Activated naive CD4-positive, alpha-beta T cell treated with anti-CD3 and anti-CD28 coated beads for 36 hours (primary cell): ENCODE measurements at regions of chr12 and their contacts with region 1.

Region 1: GRCh38 chr12:121033625-121034349 is 5.3 kb downstream of the OASL start:
- DNase-seq: peak; percentile 82
- H3K4me3 Mint-ChIP-seq: no peak overlapping the region
- H3K27ac Mint-ChIP-seq: peak overlapping the region; percentile 58
- H3K4me1 Mint-ChIP-seq: peaks cover 52% of the 10 kb centered on the region
- H3K27me3 Mint-ChIP-seq: no peaks in the 10 kb centered on the region

Region 2: GRCh38 chr12:119334430-119335170 is 1699.2 kb before region 1 on chr12 and contains the start of gene CCDC60:
- CTCF ChIA-PET with region 1: no interaction called
- intact Hi-C with region 1: no loop called
- DNase-seq: no peak
- H3K4me3 Mint-ChIP-seq: no peak within 1 kb of the TSS
- H3K27ac Mint-ChIP-seq: no peak within 1 kb of the TSS
- H3K4me1 Mint-ChIP-seq: no peaks in the 10 kb centered on the region
- H3K27me3 Mint-ChIP-seq: peaks cover 21% of the 10 kb centered on the region
- total RNA-seq, gene CCDC60: not detected

Region 3: DNA sequence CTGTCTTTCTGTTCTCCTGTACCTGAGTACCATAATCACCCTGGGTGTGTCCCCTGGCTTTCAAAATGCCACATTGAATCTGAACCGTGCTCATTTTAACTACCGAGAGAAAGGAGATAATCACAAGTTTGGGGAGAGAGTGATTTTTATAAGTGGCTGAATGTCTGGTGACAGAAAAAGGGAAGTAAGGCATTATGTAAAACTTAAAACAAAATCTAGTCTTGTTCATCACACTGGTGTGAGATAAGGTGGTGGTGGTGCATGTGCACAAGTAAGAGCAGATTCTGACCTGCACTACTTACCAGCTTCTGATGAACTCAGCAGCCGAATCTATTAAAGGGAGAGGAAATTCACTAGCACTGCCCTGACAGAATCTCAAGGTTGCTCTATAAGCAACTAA is 186.0 kb before region 1 on chr12:
- CTCF ChIA-PET with region 1: no interaction called
- intact Hi-C with region 1: no loop called
- DNase-seq: no peak
- H3K4me3 Mint-ChIP-seq: no peak overlapping the region
- H3K27ac Mint-ChIP-seq: no peak overlapping the region
- H3K4me1 Mint-ChIP-seq: peaks cover 59% of the 10 kb centered on the region
- H3K27me3 Mint-ChIP-seq: no peaks in the 10 kb centered on the region

Region 4: DNA sequence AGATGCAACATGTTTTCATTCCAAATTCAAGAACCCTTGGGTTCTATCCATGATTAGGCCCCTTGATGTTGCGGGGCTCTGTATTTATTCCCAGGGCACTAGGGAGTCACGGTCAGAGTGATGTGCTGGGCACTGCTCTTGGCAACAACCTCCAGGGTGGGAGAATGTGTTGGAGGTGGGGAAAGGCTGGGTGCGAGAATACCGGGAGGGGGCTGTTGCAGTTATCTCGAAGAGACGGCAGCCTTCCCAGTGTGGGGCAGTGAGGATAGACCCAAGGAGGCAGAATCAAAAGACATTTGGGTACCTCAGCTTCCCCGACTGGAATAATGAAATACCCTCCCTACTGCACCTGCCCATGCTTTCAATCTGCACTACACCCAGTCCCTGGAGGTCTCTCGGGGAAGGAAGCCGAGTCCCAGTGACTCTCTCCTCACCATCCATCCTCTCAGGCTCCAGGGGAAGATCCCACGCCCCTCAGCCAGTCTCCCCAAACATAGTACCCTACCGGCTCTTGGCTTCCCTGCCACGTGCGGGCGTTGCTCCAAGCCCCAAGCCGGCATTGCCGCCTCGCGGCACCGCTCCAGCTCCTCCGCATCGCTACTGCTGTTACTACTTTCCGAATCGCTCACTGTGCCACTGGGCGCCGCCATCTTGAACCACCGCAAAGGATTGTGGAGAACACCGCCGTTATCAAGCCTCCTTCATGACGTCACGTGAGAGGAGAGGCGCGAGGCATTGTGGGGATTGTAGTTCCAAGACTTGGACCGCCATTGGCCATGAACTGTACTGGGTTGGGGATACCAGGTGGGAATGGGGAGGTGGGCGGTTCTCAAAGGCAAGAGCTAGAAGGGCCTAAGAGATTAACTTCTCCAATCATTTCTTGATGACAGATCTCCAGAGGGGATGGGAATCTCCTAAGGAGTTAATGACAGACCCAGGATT is 17.7 kb before region 1 on chr12 and contains the start of gene C12orf43:
- CTCF ChIA-PET with region 1: interaction called, 3 read pairs
- intact Hi-C with region 1: loop called (anchors 1 kb)
- DNase-seq: peak; percentile 98
- H3K4me3 Mint-ChIP-seq: peak within 1 kb of the TSS; percentile 100
- H3K27ac Mint-ChIP-seq: peak within 1 kb of the TSS; percentile 92
- H3K4me1 Mint-ChIP-seq: peaks cover 23% of the 10 kb centered on the region
- H3K27me3 Mint-ChIP-seq: no peaks in the 10 kb centered on the region
- total RNA-seq, gene C12orf43: 14.1 to 15.0 TPM

Region 5: DNA sequence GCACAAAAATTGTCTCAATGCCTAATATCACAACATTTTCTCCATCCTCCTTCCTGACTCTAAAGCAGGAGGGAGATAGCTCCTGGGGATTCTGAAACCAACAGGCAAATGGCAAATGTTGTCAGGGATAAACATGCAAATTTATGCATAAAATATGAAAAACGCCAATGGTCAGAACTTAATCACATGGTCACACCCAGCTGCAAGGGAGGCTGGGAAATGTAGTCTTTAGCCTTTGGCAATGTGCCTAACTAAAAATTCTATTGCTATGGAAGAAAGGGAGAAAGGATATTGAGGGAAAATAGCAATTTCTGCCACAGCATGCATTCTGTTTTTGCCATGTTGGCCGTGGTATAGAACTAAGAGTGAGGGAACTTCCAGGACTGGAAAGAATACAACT is 16.9 kb after region 1 on chr12:
- CTCF ChIA-PET with region 1: no interaction called
- intact Hi-C with region 1: no loop called
- DNase-seq: no peak
- H3K4me3 Mint-ChIP-seq: no peak overlapping the region
- H3K27ac Mint-ChIP-seq: no peak overlapping the region
- H3K4me1 Mint-ChIP-seq: no peaks in the 10 kb centered on the region
- H3K27me3 Mint-ChIP-seq: peaks cover 1% of the 10 kb centered on the region